IMR-90 (cell line): ENCODE measurements at regions of chr2 and their contacts with region 1.

Region 1: DNA sequence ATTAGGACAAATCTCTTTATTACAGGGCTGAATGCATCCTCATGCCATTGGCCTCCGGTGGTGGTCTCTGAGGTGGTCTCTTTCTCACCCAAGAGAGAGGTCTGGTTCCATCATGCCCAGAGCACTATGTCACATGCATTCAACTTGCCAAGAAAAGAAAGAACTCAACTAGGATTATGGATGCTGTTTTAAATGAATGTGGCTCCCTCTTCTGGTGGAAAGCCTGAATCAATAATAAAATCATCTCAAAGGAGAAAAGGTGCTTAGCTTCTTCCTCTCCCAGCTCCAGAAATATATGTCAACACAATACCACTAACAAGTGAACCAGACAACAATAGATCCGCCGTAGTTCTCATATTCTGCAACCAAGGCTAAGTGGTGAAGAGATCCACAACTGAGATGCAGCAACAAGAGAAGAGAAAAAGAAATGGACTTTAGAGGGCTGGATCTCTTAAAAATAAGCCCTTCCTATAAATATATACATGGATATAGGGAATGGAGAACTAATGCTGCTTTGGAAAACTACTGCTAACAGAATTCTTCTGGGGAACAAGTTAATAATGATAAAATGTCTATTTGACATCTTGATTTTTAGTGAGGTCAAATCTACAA is 396.8 kb downstream of the NCKAP5 start:
- DNase-seq: peak; percentile 74
- ATAC-seq: peak; percentile 64
- H3K4me3 ChIP-seq: no peak overlapping the region
- H3K27ac ChIP-seq: no peak overlapping the region
- H3K4me1 ChIP-seq: peaks cover 11% of the 10 kb centered on the region
- H3K27me3 ChIP-seq: no peaks in the 10 kb centered on the region
- CTCF ChIP-seq: peak; percentile 80
- POLR2A ChIP-seq: no peak
- RAD21 ChIP-seq: peak; percentile 87

Region 2: DNA sequence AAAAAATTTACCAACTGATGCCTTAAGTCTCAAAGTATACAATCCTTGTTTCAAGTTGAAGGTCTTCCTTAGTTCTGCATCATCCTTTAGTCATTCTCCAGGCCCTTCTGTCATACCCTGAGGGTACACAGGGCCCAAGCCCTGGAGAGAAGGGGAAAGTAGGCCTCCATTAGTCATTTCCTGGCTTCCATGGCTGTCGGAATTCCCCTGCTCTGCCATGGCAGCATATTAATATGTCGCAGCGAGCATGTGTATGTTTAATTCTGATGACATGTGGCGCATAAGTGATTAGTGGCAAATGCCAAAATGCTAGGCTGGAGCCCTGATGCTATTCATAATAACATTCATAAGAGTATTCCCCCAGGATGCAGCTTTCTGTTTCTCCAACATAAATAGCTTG is 732.8 kb before region 1 on chr2:
- CTCF ChIA-PET with region 1: no interaction called
- POLR2A ChIA-PET with region 1: no interaction called
- dilution Hi-C with region 1: no loop called
- in situ Hi-C with region 1: no loop called
- intact Hi-C with region 1: loop called (anchors 10 kb)
- DNase-seq: peak; percentile 97
- ATAC-seq: peak; percentile 91
- H3K4me3 ChIP-seq: no peak overlapping the region
- H3K27ac ChIP-seq: peak overlapping the region; percentile 15; the same call in 1 of the 2 replicates
- H3K4me1 ChIP-seq: peaks cover 11% of the 10 kb centered on the region; the same call in 1 of the 2 replicates
- H3K27me3 ChIP-seq: no peaks in the 10 kb centered on the region
- CTCF ChIP-seq: no peak
- POLR2A ChIP-seq: no peak
- RAD21 ChIP-seq: no peak

Region 3: DNA sequence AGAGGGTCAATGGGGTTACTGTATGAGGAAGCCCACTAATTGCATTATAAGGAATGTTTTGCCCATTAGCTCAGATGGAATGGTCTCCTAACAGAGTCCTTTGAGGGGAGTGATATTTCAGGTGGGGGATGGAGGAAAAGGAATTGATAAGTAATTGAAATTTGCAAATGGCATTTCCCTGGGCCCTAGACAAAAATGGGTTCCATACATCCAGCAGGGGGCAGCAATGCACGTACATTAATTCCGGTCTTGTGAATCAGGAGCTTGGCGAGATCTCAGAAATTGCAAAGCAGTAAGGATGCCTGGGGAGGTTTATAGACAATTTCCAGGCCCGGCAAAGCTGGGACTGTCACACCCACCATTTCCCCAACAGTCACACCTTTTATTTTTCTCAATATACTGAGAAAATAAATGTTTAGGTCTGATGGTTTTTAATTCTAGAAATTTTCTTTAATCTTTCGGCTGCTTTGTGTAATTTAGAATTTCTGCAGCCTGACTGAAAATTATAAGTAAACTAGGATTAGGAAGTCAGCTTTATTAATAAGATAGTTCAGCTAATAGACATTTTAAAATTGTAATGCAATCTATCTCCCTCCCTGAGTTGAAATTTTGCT is 624.3 kb before region 1 on chr2:
- CTCF ChIA-PET with region 1: no interaction called
- POLR2A ChIA-PET with region 1: no interaction called
- dilution Hi-C with region 1: no loop called
- in situ Hi-C with region 1: loop called (anchors 5 kb)
- intact Hi-C with region 1: loop called (anchors 1 kb)
- DNase-seq: peak; percentile 85
- ATAC-seq: peak; percentile 67
- H3K4me3 ChIP-seq: no peak overlapping the region
- H3K27ac ChIP-seq: no peak overlapping the region
- H3K4me1 ChIP-seq: peaks cover 3% of the 10 kb centered on the region
- H3K27me3 ChIP-seq: no peaks in the 10 kb centered on the region
- CTCF ChIP-seq: peak; percentile 78
- POLR2A ChIP-seq: no peak
- RAD21 ChIP-seq: peak; percentile 85

Region 4: DNA sequence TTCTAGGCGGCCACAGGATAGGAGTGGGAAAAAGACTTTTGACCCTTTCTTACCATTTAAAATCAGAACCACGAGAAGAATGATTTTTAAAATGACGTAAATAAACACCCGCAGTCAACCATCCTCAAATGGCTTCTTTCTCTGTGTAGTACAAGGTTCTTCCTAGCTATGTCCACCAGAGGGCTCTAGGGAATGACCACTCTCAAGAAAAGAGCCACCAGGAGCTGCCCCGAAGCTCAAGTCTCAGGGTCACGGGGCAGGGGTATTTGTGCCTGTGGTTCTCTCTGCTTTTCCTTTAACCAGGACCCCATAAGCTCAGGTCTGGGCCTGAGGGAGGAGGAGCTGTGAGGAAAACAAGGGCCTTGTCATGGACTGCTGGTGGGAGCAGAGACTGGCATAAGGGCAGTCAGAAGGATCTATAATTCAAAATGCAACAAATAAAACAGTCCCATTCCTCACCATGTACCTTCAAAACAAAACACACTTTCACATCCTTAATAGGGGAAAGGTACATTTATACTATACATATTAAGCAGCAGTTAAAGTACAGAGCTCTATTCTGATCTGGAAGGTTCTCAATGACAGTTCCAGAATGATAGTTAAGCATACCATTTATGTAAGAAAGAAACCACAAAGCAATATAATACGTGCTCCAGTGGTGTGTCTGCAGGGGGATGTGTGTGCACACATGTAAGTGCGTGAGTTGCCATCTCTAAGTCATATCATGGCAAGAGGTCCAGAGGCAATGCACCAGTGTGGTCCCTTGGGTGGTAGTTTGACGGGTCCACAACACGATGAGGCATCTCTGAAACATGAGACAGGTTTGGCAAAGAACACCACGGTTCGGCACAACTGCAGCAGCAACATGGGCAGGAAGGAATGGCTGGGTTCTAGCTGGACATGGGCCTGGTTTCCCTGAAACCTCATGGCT is 520.1 kb before region 1 on chr2:
- CTCF ChIA-PET with region 1: interaction called, 3 read pairs
- POLR2A ChIA-PET with region 1: no interaction called
- dilution Hi-C with region 1: no loop called
- in situ Hi-C with region 1: loop called (anchors 5 kb)
- intact Hi-C with region 1: loop called (anchors 5 kb)
- DNase-seq: peak; percentile 71
- ATAC-seq: peak; percentile 91
- H3K4me3 ChIP-seq: no peak overlapping the region
- H3K27ac ChIP-seq: peak overlapping the region; percentile 4
- H3K4me1 ChIP-seq: peaks cover 13% of the 10 kb centered on the region
- H3K27me3 ChIP-seq: no peaks in the 10 kb centered on the region
- CTCF ChIP-seq: peak; percentile 71
- POLR2A ChIP-seq: no peak
- RAD21 ChIP-seq: peak; percentile 74

Region 5: GRCh38 chr2:133204421-133204820 is 32.9 kb after region 1 on chr2:
- CTCF ChIA-PET with region 1: no interaction called
- POLR2A ChIA-PET with region 1: no interaction called
- dilution Hi-C with region 1: no loop called
- in situ Hi-C with region 1: no loop called
- intact Hi-C with region 1: no loop called
- DNase-seq: no peak
- ATAC-seq: no peak
- H3K4me3 ChIP-seq: no peak overlapping the region
- H3K27ac ChIP-seq: no peak overlapping the region
- H3K4me1 ChIP-seq: peaks cover 2% of the 10 kb centered on the region; the same call in 1 of the 2 replicates
- H3K27me3 ChIP-seq: no peaks in the 10 kb centered on the region
- CTCF ChIP-seq: no peak
- POLR2A ChIP-seq: no peak
- RAD21 ChIP-seq: no peak